ENCODE measurements at regions of chr2 and their contacts with region 1.

Region 1: GRCh38 chr2:18520451-18521425 is 39.7 kb downstream of the RDH14 start:
- DNase-seq: peak; percentile 92
- ATAC-seq: peak; percentile 89

Region 2: GRCh38 chr2:18560031-18560796 is 39.5 kb after region 1 on chr2 and contains the start of gene RDH14:
- intact Hi-C with region 1: loop called (anchors 2 kb)
- DNase-seq: peak; percentile 95
- ATAC-seq: peak; percentile 96
- total RNA-seq, gene RDH14: 45.5 TPM

Region 3: GRCh38 chr2:18671363-18671762 is 150.6 kb after region 1 on chr2:
- intact Hi-C with region 1: no loop called
- DNase-seq: no peak
- ATAC-seq: no peak

Region 4: GRCh38 chr2:18741895-18742732 is 221.4 kb after region 1 on chr2:
- intact Hi-C with region 1: loop called (anchors 5 kb)
- DNase-seq: peak; percentile 50
- ATAC-seq: peak; percentile 81

Region 5: GRCh38 chr2:19349911-19350677 is 829.4 kb after region 1 on chr2:
- intact Hi-C with region 1: loop called (anchors 5 kb)
- DNase-seq: peak; percentile 78
- ATAC-seq: peak; percentile 38

Region 6: GRCh38 chr2:19863303-19864041 is 1342.7 kb after region 1 on chr2:
- intact Hi-C with region 1: loop called (anchors 5 kb)
- DNase-seq: peak; percentile 86
- ATAC-seq: peak; percentile 91